AG04449 (cell line): ENCODE measurements at regions of chr13 and their contacts with region 1.

Region 1: GRCh38 chr13:111066544-111066943 is 48.6 kb upstream of the ARHGEF7 start:
- DNase-seq: no peak
- H3K4me3 ChIP-seq: no peak overlapping the region
- CTCF ChIP-seq: no peak

Region 2: DNA sequence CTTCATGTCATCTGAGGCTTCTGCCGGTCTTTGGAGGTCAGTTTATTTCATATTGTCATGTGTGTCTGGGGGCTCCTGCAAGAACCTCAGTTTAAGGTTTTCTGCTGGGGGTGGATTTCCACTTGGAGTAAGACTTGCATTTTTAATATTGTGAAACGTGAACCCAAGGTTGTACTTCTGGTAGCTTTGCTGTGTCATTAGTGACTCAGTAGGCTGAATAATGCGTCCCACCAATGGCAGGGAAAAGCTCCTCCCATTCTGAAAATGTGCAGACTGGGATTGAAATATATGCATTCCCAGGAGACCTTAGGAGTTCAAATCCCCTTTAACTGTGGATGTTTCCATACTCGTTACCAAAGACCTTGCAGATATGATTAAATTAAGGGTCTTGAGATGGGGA is 306.8 kb before region 1 on chr13:
- CTCF ChIA-PET with region 1: no interaction called
- POLR2A ChIA-PET with region 1: no interaction called
- DNase-seq: no peak
- H3K4me3 ChIP-seq: no peak overlapping the region
- CTCF ChIP-seq: no peak

Region 3: DNA sequence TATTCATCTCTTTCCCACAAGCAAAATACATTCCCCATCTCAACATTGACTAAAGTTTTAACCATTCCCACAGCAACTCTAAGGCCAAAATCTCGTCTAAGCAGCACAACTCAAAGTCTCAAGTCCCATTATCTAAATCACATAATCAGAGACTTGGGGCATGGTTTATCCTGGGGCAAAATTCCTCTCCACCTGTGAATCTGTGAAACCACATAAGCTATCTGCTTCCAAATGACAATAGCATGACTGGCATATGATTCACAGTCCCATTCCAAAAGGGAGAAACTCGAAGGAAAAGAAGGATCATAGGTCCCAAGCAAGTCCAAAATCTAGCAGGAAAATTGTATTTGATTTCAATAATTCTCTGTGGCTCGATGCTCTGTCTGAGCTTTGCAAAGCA is 224.7 kb before region 1 on chr13:
- CTCF ChIA-PET with region 1: no interaction called
- POLR2A ChIA-PET with region 1: no interaction called
- DNase-seq: no peak
- H3K4me3 ChIP-seq: no peak overlapping the region
- CTCF ChIP-seq: no peak

Region 4: GRCh38 chr13:111046590-111047141 is 19.9 kb before region 1 on chr13:
- CTCF ChIA-PET with region 1: interaction called, 13 read pairs
- POLR2A ChIA-PET with region 1: no interaction called
- DNase-seq: no peak
- H3K4me3 ChIP-seq: no peak overlapping the region
- CTCF ChIP-seq: no peak

Region 5: DNA sequence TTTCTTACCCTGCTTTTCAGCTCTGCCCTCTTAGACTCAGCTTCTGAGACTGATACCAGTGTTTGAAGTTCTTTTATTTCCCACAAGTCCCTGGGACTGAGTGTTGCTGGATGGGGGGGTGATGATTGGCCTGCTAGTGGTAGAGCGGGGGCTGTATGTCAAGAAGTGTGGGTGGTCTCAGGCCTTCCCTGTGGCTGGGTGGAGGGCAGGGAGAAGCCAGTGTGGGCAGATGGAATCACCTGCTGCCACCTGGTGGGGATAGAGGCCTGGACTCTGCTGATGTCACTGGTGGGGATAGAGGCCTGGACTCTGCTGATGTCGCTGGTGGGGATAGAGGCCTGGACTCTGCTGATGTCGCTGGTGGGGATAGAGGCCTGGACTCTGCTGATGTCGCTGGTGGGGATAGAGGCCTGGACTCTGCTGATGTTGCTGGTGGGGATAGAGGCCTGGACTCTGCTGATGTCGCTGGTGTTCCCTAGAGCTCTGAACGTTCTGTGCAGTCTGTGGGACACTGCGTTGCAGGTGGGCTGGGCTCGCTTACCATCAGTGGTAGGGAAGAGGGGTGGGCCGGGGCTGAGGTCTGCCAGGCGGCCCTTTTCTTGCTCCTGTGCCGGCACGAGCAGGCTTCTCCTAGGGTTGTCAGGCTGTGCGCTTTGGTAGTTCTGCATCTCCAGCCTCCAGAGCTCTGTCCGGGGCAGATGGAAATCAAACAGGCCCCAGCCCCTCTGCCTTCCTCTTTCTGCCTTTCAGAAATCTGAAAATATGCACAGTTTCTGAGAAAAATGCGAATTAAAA is 149.8 kb after region 1 on chr13:
- CTCF ChIA-PET with region 1: interaction called, 78 read pairs
- POLR2A ChIA-PET with region 1: no interaction called
- DNase-seq: no peak
- H3K4me3 ChIP-seq: no peak overlapping the region
- CTCF ChIP-seq: peak; percentile 47

Region 6: DNA sequence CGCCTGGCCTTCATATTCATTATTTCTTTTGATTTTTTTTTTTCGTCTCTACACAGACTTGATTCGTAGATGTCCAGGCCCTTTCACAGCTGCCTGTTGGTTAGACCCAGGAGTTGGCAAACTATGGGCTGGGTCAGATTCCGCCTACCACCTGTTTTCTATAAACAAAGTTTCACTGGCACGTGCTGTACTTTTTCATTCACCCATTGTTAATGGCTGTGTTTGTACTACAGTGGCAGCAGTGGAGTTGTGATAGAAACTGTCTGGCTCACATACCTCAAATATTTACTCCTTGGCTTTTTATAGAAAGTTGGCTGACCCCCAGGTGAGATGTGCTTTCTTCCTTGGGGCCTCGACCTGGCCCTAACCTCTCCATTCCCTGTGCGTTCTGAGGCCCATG is 181.0 kb after region 1 on chr13:
- CTCF ChIA-PET with region 1: interaction called, 12 read pairs
- POLR2A ChIA-PET with region 1: no interaction called
- DNase-seq: no peak
- H3K4me3 ChIP-seq: no peak overlapping the region
- CTCF ChIP-seq: no peak

Region 7: GRCh38 chr13:111460548-111461444 is 394.3 kb after region 1 on chr13:
- CTCF ChIA-PET with region 1: interaction called, 29 read pairs
- POLR2A ChIA-PET with region 1: no interaction called
- DNase-seq: peak; percentile 12
- H3K4me3 ChIP-seq: no peak overlapping the region
- CTCF ChIP-seq: peak; percentile 53